ENCODE measurements at regions of chr15 and their contacts with region 1.

Region 1: DNA sequence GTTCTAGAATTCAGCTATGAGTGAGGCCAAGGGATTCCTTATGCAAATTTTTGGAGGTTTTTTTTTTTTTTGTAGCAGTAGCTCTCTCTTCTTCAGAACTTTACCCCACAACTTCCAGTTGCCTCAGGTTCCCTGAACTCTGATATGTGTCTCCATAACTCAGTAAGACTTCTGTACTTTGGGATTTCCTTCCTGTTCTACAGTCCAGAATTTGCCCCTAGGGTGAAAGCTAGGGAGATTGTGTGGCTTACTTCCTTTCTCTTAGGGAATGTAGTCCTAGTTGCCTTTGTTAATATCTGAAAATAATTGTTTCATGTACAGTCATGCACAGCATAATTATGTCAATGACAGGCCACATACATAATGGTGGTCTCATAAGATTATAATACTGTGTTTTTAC is 30.8 kb downstream of the LRRC28 start:
- DNase-seq: no peak
- H3K4me3 Mint-ChIP-seq: no peak overlapping the region
- H3K27ac Mint-ChIP-seq: no peak overlapping the region
- H3K4me1 Mint-ChIP-seq: peaks cover 46% of the 10 kb centered on the region
- H3K27me3 Mint-ChIP-seq: no peaks in the 10 kb centered on the region

Region 2: GRCh38 chr15:98734466-98735199 is 547.5 kb before region 1 on chr15:
- intact Hi-C with region 1: no loop called
- DNase-seq: no peak
- H3K4me3 Mint-ChIP-seq: no peak overlapping the region
- H3K27ac Mint-ChIP-seq: no peak overlapping the region
- H3K4me1 Mint-ChIP-seq: peaks cover 26% of the 10 kb centered on the region
- H3K27me3 Mint-ChIP-seq: no peaks in the 10 kb centered on the region

Region 3: GRCh38 chr15:99343881-99344551 is 61.9 kb after region 1 on chr15:
- intact Hi-C with region 1: loop called (anchors 5 kb)
- DNase-seq: no peak
- H3K4me3 Mint-ChIP-seq: no peak overlapping the region
- H3K27ac Mint-ChIP-seq: peak overlapping the region; percentile 11
- H3K4me1 Mint-ChIP-seq: peaks cover 12% of the 10 kb centered on the region
- H3K27me3 Mint-ChIP-seq: no peaks in the 10 kb centered on the region